Activated CD4-positive, alpha-beta T cell treated with anti-CD3 and anti-CD28 coated beads, Interleukin-2, amount 10 ng/mL, durations not matched to agents 24 days and 14 days (primary cell): ENCODE measurements at regions of chr10 and their contacts with region 1.

Region 1: GRCh38 chr10:101782811-101783735 is at the start of gene NPM3:
- DNase-seq: peak; percentile 96
- H3K4me3 Mint-ChIP-seq: peak within 1 kb of the TSS; percentile 100
- H3K27ac Mint-ChIP-seq: peak within 1 kb of the TSS; percentile 99
- H3K4me1 Mint-ChIP-seq: peaks cover 47% of the 10 kb centered on the region
- H3K27me3 Mint-ChIP-seq: peaks cover 9% of the 10 kb centered on the region
- total RNA-seq, gene NPM3: 172 and 175 TPM in 2 replicates

Region 2: GRCh38 chr10:101130984-101131961 is 651.8 kb before region 1 on chr10 and contains the start of gene TLX1:
- intact Hi-C with region 1: loop called (anchors 10 kb)
- DNase-seq: peak; percentile 59
- H3K4me3 Mint-ChIP-seq: no peak within 1 kb of the TSS
- H3K27ac Mint-ChIP-seq: no peak within 1 kb of the TSS
- H3K4me1 Mint-ChIP-seq: peaks cover 13% of the 10 kb centered on the region
- H3K27me3 Mint-ChIP-seq: peaks cover 85% of the 10 kb centered on the region
- total RNA-seq, gene TLX1: not detected in 2 replicates

Region 3: GRCh38 chr10:101214446-101215396 is 568.4 kb before region 1 on chr10:
- intact Hi-C with region 1: loop called (anchors 5 kb)
- DNase-seq: peak; percentile 90
- H3K4me3 Mint-ChIP-seq: peak overlapping the region; percentile 59
- H3K27ac Mint-ChIP-seq: peak overlapping the region; percentile 69
- H3K4me1 Mint-ChIP-seq: peaks cover 18% of the 10 kb centered on the region
- H3K27me3 Mint-ChIP-seq: peaks cover 79% of the 10 kb centered on the region

Region 4: GRCh38 chr10:101453791-101454718 is 329.0 kb before region 1 on chr10:
- intact Hi-C with region 1: no loop called
- DNase-seq: no peak
- H3K4me3 Mint-ChIP-seq: no peak overlapping the region
- H3K27ac Mint-ChIP-seq: no peak overlapping the region
- H3K4me1 Mint-ChIP-seq: peaks cover 11% of the 10 kb centered on the region
- H3K27me3 Mint-ChIP-seq: peaks cover 9% of the 10 kb centered on the region

Region 5: GRCh38 chr10:101587725-101588653 is 195.1 kb before region 1 on chr10 and contains the starts of genes DPCD and POLL:
- intact Hi-C with region 1: loop called (anchors 5 kb)
- DNase-seq: peak; percentile 97
- H3K4me3 Mint-ChIP-seq: peak within 1 kb of the TSS; percentile 95
- H3K27ac Mint-ChIP-seq: peak within 1 kb of the TSS; percentile 86
- H3K4me1 Mint-ChIP-seq: peaks cover 18% of the 10 kb centered on the region
- H3K27me3 Mint-ChIP-seq: no peaks in the 10 kb centered on the region
- total RNA-seq, gene DPCD: 5.4 and 6.4 TPM in 2 replicates
- total RNA-seq, gene POLL: 32.2 and 33.8 TPM in 2 replicates

Region 6: GRCh38 chr10:101693978-101694673 is 88.9 kb before region 1 on chr10:
- intact Hi-C with region 1: loop called (anchors 2 kb)
- DNase-seq: peak; percentile 93
- H3K4me3 Mint-ChIP-seq: peak overlapping the region; percentile 98
- H3K27ac Mint-ChIP-seq: peak overlapping the region; percentile 99
- H3K4me1 Mint-ChIP-seq: peaks cover 24% of the 10 kb centered on the region
- H3K27me3 Mint-ChIP-seq: no peaks in the 10 kb centered on the region

Region 7: GRCh38 chr10:101840741-101841453 is 57.8 kb after region 1 on chr10:
- intact Hi-C with region 1: no loop called
- DNase-seq: peak; percentile 94
- H3K4me3 Mint-ChIP-seq: peak overlapping the region; percentile 86
- H3K27ac Mint-ChIP-seq: peak overlapping the region; percentile 62
- H3K4me1 Mint-ChIP-seq: peaks cover 38% of the 10 kb centered on the region
- H3K27me3 Mint-ChIP-seq: peaks cover 10% of the 10 kb centered on the region

Region 8: DNA sequence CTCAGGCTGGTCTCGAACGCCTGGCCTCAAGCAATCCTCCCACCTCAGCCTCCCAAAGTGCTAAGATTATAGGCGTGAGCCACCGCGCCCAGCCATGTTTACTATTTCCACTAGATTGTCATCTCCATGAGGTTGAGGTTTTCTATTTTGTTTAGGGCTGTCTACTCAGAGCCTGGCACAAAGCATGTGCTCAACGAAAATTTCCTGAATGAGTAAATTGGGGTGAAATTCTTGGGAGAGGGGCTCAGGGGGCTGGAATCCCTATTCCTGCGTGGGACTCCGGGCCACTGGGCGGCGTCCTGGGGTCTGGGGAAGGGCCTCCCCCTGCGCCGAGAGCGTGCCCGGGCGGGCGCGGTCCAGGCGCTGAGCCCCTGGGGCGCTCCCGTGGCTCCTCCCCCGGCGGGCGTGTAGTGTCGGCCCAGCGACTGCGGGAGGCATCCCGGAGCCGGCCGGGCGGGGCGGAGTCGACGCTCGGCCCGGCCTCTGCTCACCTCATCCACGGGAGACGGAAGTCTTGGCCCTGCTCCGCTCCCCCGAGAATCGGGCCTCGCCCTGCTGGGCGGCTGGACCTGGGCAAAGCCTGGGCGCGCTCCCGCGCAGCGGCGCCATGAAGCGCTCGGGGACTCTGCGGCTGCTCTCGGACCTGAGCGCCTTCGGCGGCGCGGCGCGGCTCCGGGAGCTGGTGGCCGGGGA is 281.9 kb after region 1 on chr10 and contains the start of gene HPS6:
- intact Hi-C with region 1: loop called (anchors 5 kb)
- DNase-seq: peak; percentile 97
- H3K4me3 Mint-ChIP-seq: peak within 1 kb of the TSS; percentile 87
- H3K27ac Mint-ChIP-seq: peak within 1 kb of the TSS; percentile 94
- H3K4me1 Mint-ChIP-seq: peaks cover 23% of the 10 kb centered on the region
- H3K27me3 Mint-ChIP-seq: no peaks in the 10 kb centered on the region
- total RNA-seq, gene HPS6: 22.7 and 25.8 TPM in 2 replicates